ENCODE measurements at regions of chr2 and their contacts with region 1.

Region 1: DNA sequence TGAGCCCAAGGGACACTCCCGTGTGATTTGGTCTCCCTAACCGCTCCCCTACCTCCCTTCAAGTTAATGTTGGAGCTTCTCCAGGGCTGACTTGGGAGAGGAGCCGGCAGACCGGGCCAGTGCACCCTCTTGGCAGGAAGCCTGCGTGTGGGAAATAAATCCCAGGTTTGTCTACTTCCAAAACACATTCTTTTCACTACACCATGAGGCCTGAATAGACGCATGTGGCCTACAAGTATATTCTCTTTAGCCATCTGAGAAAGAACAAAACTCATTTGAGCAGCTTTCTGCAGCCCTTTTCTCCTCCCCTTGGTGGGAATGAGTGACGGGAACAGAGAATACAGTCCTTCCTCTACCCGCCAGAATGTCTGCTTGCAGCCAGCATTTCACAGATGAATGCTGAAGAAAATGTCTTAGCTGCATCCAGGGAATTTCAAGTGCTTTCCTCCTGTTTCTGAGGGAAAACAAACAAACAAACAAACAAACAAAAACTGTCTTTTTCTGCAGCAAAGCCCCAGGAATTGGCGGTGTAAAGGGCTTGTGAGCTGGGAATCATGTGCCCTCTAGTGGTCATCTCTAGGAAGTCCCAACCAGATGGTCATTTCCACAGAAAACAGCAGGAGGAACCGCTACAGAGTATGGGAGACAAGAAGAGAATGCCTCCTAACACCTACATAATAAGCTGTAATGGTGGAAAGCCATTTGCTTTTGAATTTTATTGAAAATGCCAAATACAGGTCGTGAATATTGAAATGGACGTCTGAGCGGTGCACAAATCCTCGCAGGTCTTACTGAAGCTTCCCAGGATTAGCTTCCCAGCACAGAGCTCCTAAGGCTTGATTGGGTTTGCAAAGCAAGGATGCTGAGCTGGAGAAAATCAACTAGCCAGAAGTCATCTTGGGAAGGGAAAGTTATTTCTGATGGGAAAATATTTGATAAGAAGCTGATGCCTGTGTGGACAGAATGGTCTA is 41.2 kb upstream of the DAPL1 start:
- DNase-seq: peak in 9 of 14 experiments; percentile 4 to 66 (median 12)
- ATAC-seq: peak; percentile 61
- H3K4me3 ChIP-seq: no peak overlapping the region
- H3K4me3 Mint-ChIP-seq: no peak overlapping the region
- H3K27ac ChIP-seq: no peak overlapping the region
- H3K27ac Mint-ChIP-seq: no peak overlapping the region
- H3K4me1 ChIP-seq: no peaks in the 10 kb centered on the region
- H3K4me1 Mint-ChIP-seq: no peaks in the 10 kb centered on the region
- H3K27me3 ChIP-seq: peaks cover 0 to 5% of the 10 kb centered on the region in 2 experiments
- H3K27me3 Mint-ChIP-seq: peaks cover 48% of the 10 kb centered on the region
- CTCF ChIP-seq: peak; percentile 90

Region 2: DNA sequence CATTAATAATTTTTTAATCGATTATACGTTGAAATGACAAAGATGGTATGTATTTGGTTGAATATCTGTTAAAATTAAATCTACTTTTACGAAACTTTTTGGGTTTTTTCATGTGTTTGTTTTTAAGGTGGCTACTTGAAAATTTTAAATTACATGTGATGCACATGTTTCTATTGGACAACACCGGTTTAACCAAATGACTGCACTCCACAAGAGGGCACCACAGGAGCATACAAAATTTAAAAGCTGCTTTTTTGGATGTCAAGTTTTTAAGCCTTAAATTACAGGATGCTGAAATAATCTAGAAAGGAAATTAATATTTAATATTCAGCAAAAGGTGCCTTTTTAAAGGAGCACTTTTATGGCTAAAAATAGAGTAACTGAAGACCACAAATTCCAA is 976.5 kb before region 1 on chr2:
- CTCF ChIA-PET with region 1: no interaction called
- POLR2A ChIA-PET with region 1: no interaction called
- intact Hi-C with region 1: loop called (anchors 10 kb)
- DNase-seq: peak; percentile 13 to 62 (median 39)
- ATAC-seq: no peak
- H3K4me3 ChIP-seq: no peak overlapping the region
- H3K4me3 Mint-ChIP-seq: no peak overlapping the region
- H3K27ac ChIP-seq: no peak overlapping the region
- H3K27ac Mint-ChIP-seq: no peak overlapping the region
- H3K4me1 ChIP-seq: peaks cover 8% of the 10 kb centered on the region
- H3K4me1 Mint-ChIP-seq: peaks cover 13% of the 10 kb centered on the region
- H3K27me3 ChIP-seq: no peaks in the 10 kb centered on the region
- H3K27me3 Mint-ChIP-seq: no peaks in the 10 kb centered on the region
- CTCF ChIP-seq: peak; percentile 64

Region 3: DNA sequence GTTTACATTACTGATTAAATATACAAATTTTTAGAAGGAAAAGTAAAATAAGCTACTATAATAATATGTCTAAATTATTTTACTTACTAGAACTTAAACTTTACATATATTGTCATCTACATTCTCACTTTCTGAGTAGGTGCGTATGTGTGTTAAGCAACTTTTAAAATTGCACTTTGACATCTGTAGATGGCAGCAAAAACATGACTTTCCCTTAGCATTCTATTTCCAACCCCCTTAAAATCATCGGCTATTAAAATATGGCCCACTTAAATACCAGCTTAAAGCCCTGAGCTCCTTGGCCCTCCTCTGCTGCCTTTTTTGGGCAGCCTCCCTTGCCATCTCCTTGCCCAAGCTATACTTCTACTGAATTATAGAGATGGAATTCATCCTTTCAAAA is 574.3 kb before region 1 on chr2:
- CTCF ChIA-PET with region 1: no interaction called
- POLR2A ChIA-PET with region 1: no interaction called
- intact Hi-C with region 1: loop called (anchors 5 kb)
- DNase-seq: peak in 1 of 14 experiments; percentile 6
- ATAC-seq: no peak
- H3K4me3 ChIP-seq: no peak overlapping the region
- H3K4me3 Mint-ChIP-seq: no peak overlapping the region
- H3K27ac ChIP-seq: no peak overlapping the region
- H3K27ac Mint-ChIP-seq: no peak overlapping the region
- H3K4me1 ChIP-seq: no peaks in the 10 kb centered on the region
- H3K4me1 Mint-ChIP-seq: no peaks in the 10 kb centered on the region
- H3K27me3 ChIP-seq: peaks cover 7 to 12% of the 10 kb centered on the region in 2 experiments
- H3K27me3 Mint-ChIP-seq: peaks cover 44% of the 10 kb centered on the region
- CTCF ChIP-seq: peak; percentile 49

Region 4: DNA sequence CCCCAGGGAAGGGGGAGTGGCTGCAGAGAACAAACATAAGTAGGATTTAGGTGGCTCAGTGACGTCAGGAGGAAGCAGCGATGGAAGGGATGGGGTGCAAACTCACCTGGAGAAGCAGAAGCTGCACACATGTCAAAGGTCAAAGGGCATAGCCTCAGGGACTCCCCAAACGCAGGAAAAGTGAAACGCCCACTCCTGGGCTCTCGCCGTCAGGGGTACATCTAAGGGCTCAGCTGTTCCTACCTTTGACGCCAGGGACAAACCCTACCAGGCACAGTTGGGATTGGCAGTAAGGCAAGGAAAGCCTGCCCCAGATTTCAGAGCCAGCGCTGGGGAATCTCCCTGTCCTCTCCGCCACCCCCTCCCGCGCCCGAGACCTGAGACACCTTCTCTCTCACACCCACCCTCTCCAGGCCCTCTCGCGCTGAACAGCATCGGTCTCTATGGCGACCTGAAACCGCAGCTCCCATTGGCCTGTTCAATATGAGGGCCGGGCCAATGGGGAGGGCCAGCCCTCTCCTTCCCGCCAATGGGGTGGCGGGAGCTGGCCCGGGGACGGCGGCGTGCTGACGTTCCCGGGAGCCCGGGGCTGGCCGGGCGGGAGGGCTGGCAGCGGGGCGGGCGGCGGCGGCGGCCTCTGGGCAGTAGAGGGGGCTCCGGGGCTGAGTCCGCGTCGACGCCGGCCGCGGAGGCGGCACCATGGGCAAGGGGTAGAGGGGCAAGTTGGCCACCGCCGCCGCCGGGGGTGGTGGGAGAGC is 297.4 kb before region 1 on chr2 and contains the starts of genes CCDC148 and PKP4:
- CTCF ChIA-PET with region 1: no interaction called
- POLR2A ChIA-PET with region 1: interaction called, 3 read pairs
- intact Hi-C with region 1: loop called in 1 of 2 experiments (anchors 10 kb)
- DNase-seq: peak; percentile 71 to 97 (median 84)
- ATAC-seq: peak; percentile 90
- H3K4me3 ChIP-seq: peak within 1 kb of the TSS; percentile 76
- H3K4me3 Mint-ChIP-seq: peak within 1 kb of the TSS; percentile 99
- H3K27ac ChIP-seq: peak within 1 kb of the TSS; percentile 33 to 47
- H3K27ac Mint-ChIP-seq: peak within 1 kb of the TSS; percentile 84
- H3K4me1 ChIP-seq: peaks cover 15% of the 10 kb centered on the region
- H3K4me1 Mint-ChIP-seq: peaks cover 28% of the 10 kb centered on the region
- H3K27me3 ChIP-seq: no peaks in the 10 kb centered on the region
- H3K27me3 Mint-ChIP-seq: no peaks in the 10 kb centered on the region
- CTCF ChIP-seq: no peak
- total RNA-seq, gene CCDC148: not detected
- total RNA-seq, gene PKP4: 10.8 to 14.6 TPM

Region 5: GRCh38 chr2:159013103-159013502 is 259.2 kb after region 1 on chr2:
- CTCF ChIA-PET with region 1: no interaction called
- POLR2A ChIA-PET with region 1: no interaction called
- intact Hi-C with region 1: no loop called
- DNase-seq: no peak
- ATAC-seq: no peak
- H3K4me3 ChIP-seq: no peak overlapping the region
- H3K4me3 Mint-ChIP-seq: no peak overlapping the region
- H3K27ac ChIP-seq: no peak overlapping the region
- H3K27ac Mint-ChIP-seq: no peak overlapping the region
- H3K4me1 ChIP-seq: no peaks in the 10 kb centered on the region
- H3K4me1 Mint-ChIP-seq: no peaks in the 10 kb centered on the region
- H3K27me3 ChIP-seq: peaks cover 0 to 3% of the 10 kb centered on the region in 2 experiments
- H3K27me3 Mint-ChIP-seq: peaks cover 4% of the 10 kb centered on the region
- CTCF ChIP-seq: no peak

Region 6: GRCh38 chr2:159131914-159132281 is 378.0 kb after region 1 on chr2:
- CTCF ChIA-PET with region 1: no interaction called
- POLR2A ChIA-PET with region 1: no interaction called
- intact Hi-C with region 1: no loop called
- DNase-seq: no peak
- ATAC-seq: no peak
- H3K4me3 ChIP-seq: no peak overlapping the region
- H3K4me3 Mint-ChIP-seq: no peak overlapping the region
- H3K27ac ChIP-seq: no peak overlapping the region
- H3K27ac Mint-ChIP-seq: no peak overlapping the region
- H3K4me1 ChIP-seq: peaks cover 2% of the 10 kb centered on the region
- H3K4me1 Mint-ChIP-seq: peaks cover 4% of the 10 kb centered on the region
- H3K27me3 ChIP-seq: no peaks in the 10 kb centered on the region
- H3K27me3 Mint-ChIP-seq: no peaks in the 10 kb centered on the region
- CTCF ChIP-seq: no peak